Common myeloid progenitor, CD34-positive (primary cell): ENCODE measurements at regions of chr6 and their contacts with region 1.

Region 1: DNA sequence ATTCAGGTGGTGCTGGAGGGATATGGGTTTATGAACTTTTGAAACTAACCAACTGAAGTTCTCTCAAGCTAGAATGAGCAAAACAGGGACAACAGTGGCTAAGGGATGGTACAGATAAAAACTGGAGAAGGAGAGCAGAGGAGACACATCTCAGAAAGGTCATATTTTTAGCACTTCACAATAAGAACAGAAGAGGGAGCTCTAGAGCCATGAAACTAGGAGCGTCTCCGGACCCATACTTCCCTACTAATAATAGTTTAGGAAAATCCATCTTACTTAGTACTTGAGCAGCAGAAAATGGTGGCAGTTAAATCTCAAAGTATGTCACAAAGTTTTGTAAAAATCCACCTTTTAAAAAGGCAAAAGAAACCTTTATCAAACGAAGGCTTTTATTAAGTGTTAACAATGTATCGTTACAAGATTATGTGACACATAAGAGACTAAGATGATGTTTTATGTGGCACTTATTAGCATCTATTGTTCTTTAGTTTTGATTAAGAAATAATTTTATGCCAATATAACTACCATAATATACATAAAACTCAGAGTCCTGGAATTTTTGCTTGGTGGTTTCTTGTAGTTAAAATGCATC is 278.6 kb downstream of the TBC1D32 start:
- DNase-seq: peak; percentile 24 to 56 (median 39)
- H3K4me3 ChIP-seq: no peak overlapping the region
- H3K27ac ChIP-seq: no peak overlapping the region
- H3K4me1 ChIP-seq: no peaks in the 10 kb centered on the region
- H3K27me3 ChIP-seq: no peaks in the 10 kb centered on the region

Region 2: GRCh38 chr6:121305957-121306607 is 250.4 kb after region 1 on chr6:
- CTCF ChIA-PET with region 1: interaction called, 18 read pairs
- POLR2A ChIA-PET with region 1: no interaction called
- DNase-seq: peak; percentile 34 to 60 (median 51)
- H3K4me3 ChIP-seq: no peak overlapping the region
- H3K27ac ChIP-seq: no peak overlapping the region
- H3K4me1 ChIP-seq: no peaks in the 10 kb centered on the region
- H3K27me3 ChIP-seq: no peaks in the 10 kb centered on the region